ENCODE measurements at regions of chr18 and their contacts with region 1.

Region 1: DNA sequence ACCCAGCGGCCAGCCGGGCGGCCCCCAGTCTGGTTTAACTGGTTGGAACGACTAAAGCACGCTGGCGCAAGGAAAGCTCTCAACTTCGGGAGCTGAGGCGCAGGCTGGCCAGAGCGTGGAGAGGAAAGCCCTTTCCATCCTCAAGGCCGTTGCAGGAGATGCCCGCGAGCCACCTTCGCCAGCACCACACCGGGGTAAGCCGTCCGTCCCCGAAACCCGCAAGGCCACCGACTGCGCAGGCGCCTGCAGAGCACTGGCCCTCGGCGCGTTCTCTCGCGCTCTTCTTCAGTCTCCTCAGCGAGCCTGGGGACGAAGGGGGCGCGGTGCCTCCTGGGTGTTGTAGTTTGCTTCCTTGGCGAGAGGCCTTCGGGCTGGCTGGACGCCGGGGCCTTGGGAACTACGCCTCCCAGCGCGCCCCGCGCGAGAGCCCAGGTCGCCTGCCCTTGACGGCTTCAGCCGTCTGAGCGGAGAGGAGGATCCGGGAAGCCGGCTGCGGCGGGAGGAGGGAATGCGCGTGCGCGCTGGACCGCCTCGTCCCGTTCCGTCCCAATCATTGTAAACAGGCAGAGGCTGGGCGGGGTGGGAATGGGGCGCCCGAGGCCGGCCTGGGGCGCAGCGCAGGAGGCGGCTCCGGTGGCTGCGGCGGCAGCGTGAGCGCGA is at the start of gene RALBP1:
- DNase-seq: peak; percentile 98
- H3K4me3 Mint-ChIP-seq: peak within 1 kb of the TSS; percentile 89
- H3K27ac Mint-ChIP-seq: peak within 1 kb of the TSS; percentile 88
- H3K4me1 Mint-ChIP-seq: peaks cover 21% of the 10 kb centered on the region
- H3K27me3 Mint-ChIP-seq: peaks cover 20% of the 10 kb centered on the region
- total RNA-seq, gene RALBP1: 39.2 and 40.1 TPM in 2 replicates

Region 2: DNA sequence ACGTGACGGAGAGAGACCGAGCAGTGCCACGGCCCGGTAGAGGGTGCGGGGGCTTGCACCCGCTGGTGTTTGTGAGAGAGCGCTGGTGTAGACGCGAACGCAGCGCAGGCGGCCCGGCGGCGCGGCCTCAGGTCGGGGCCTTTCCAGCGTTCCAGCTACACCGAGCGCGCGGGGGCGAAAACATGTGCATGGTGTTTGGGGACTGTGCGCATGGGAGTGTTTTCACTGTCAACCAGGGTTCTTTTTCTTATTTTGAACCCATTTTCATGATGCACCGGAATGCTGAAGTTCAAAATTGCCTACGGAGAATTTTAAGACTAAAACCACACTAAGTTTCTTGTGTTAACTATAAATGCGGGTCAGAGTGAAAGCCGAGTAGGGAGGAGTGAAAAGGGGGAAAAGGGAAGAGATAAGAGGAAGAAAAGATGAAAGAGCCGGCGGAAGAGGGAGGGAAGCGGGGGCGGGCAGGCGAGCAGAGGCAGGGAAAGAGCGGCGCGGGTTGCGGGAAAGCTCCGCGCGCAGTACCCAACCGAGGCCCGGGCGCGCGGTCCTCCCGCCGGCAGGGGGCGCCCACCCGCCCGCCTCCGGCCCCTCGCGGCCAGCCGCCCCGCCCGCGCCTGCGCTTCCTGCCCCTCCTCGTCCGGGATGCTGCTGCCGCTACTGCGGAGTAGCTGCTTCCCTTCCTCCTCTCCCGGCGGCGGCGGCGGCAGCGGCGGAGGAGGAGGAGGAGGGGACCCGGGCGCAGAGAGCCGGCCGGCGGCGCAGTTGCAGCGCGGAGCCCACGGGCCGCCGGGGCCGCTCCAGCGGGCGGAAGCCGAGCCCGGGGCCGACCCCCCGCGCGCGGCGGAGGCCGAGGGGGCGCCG is 866.1 kb before region 1 on chr18 and contains the start of gene RAB12:
- intact Hi-C with region 1: loop called (anchors 10 kb)
- DNase-seq: peak; percentile 79
- H3K4me3 Mint-ChIP-seq: peak within 1 kb of the TSS; percentile 94
- H3K27ac Mint-ChIP-seq: peak within 1 kb of the TSS; percentile 85
- H3K4me1 Mint-ChIP-seq: peaks cover 50% of the 10 kb centered on the region
- H3K27me3 Mint-ChIP-seq: peaks cover 20% of the 10 kb centered on the region
- total RNA-seq, gene RAB12: 14.7 and 17.2 TPM in 2 replicates

Region 3: DNA sequence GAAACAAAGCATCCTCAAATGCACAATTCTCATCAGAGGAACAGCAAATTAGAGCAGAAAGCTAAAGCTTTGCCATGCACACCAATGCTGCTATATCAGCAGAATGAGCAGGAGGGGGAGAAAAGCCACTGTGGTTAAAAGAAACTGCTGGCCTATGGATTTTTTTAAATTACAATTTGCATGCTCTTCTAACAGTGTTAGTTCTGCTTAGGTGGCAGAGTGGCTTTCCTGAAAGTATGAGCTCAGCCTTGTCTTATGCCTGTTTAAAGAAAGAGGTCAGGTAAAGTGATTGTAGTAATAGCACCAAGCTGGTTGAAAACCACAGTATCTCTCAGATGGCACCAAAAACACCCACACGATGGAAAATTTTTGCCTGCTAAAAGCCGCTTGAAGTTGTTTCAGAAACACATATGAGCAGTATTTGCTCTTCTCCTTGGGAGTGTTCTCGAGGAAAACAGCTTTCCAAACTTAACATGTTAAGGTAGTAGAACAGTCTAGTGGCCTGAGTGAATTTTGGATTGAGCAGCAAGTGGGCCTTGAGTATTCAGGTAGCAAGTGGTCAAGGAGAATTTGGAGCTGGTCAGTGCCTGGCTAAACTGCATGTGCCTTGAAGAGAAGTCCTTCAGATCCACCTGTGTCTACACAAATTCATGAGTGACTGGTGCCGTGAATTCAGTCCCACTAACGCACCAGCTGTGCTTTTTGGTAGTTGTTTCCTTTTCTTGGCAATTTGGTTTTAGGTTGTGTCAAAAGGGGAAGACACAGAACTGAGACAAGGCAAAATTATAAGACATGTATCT is 392.2 kb before region 1 on chr18:
- intact Hi-C with region 1: loop called (anchors 5 kb)
- DNase-seq: peak; percentile 49
- H3K4me3 Mint-ChIP-seq: peak overlapping the region; percentile 72
- H3K27ac Mint-ChIP-seq: peak overlapping the region; percentile 99
- H3K4me1 Mint-ChIP-seq: peaks cover 50% of the 10 kb centered on the region
- H3K27me3 Mint-ChIP-seq: no peaks in the 10 kb centered on the region

Region 4: GRCh38 chr18:9334329-9334972 is 140.7 kb before region 1 on chr18 and contains the start of gene TWSG1:
- intact Hi-C with region 1: loop called (anchors 1 kb)
- DNase-seq: peak; percentile 89
- H3K4me3 Mint-ChIP-seq: peak within 1 kb of the TSS; percentile 84
- H3K27ac Mint-ChIP-seq: peak within 1 kb of the TSS; percentile 65
- H3K4me1 Mint-ChIP-seq: peaks cover 19% of the 10 kb centered on the region
- H3K27me3 Mint-ChIP-seq: peaks cover 25% of the 10 kb centered on the region
- total RNA-seq, gene TWSG1: 12.1 and 12.9 TPM in 2 replicates

Region 5: GRCh38 chr18:9614401-9615279 is 139.5 kb after region 1 on chr18 and contains the start of gene PPP4R1:
- intact Hi-C with region 1: loop called (anchors 5 kb)
- DNase-seq: peak; percentile 58
- H3K4me3 Mint-ChIP-seq: peak within 1 kb of the TSS; percentile 93
- H3K27ac Mint-ChIP-seq: peak within 1 kb of the TSS; percentile 77
- H3K4me1 Mint-ChIP-seq: peaks cover 42% of the 10 kb centered on the region
- H3K27me3 Mint-ChIP-seq: peaks cover 27% of the 10 kb centered on the region
- total RNA-seq, gene PPP4R1: 44.3 and 48.8 TPM in 2 replicates

Measured in activated T-helper 2 cell treated with anti-CD3 and anti-CD28 coated beads, Interferon-gamma antibody, Interleukin-2, Interleukin-4, amounts not matched to agents 10 μg/mL and 5 μg/mL and 100 μg/mL, durations not matched to agents 14 hours and 24 hours and 36 hours (primary cell).